Activated T-helper 2 cell treated with anti-CD3 and anti-CD28 coated beads, Interferon-gamma antibody, Interleukin-2, Interleukin-4, amounts not matched to agents 10 μg/mL and 5 μg/mL and 100 μg/mL, durations not matched to agents 14 hours and 24 hours and 36 hours (primary cell): ENCODE measurements at regions of chr1 and their contacts with region 1.

Region 1: DNA sequence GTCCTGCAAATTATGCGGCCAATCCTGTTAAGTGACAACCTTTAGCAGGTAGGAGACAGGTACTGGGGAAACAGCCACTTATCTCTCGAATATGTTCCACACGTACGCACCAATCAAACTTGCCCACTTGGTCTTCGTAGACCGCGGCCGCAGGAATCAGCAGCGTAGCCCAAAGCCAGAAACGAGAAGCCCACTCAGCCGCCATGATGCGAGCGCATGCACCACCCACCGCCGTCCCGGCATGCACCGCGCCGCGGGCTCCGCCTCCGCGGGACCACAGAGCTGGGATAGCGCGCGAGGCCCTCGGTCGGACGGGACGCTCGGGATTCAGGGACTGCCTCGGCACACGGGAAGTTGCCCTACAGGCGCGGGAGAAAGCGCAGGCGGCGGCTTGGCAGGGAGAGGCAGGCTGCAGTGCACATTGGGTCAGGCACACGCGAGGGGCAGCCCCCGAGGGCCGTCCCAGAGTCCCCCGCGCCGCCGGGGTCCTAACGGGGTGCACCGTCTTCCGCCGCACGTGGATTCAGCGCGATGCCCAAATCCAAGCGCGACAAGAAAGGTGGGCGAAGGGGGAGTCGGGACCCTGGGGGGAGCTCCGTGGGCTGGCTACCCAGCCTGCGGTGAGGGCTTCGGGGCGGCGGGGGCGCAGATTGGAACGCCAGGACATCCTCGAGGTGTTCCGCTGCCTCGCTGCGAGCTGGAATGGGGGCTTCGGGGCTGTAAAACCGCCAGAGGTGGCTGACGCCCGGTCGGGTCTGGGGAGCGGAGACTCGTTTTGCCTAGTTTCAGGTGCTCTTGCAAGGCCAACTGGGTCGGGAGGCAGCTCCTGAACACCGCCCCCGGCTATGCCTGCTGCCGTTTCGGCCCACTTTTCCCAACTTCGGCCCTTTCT is at the starts of genes EMC1 and MRTO4:
- DNase-seq: peak; percentile 89
- H3K4me3 Mint-ChIP-seq: peak within 1 kb of the TSS; percentile 93
- H3K27ac Mint-ChIP-seq: peak within 1 kb of the TSS; percentile 97
- H3K4me1 Mint-ChIP-seq: peaks cover 24% of the 10 kb centered on the region
- H3K27me3 Mint-ChIP-seq: no peaks in the 10 kb centered on the region
- total RNA-seq, gene EMC1: 54.0 and 57.4 TPM in 2 replicates
- total RNA-seq, gene MRTO4: 109 and 113 TPM in 2 replicates

Region 2: GRCh38 chr1:18956369-18957135 is 295.0 kb before region 1 on chr1 and contains the start of gene IFFO2:
- intact Hi-C with region 1: loop called (anchors 5 kb)
- DNase-seq: peak; percentile 96
- H3K4me3 Mint-ChIP-seq: peak within 1 kb of the TSS; percentile 86
- H3K27ac Mint-ChIP-seq: peak within 1 kb of the TSS; percentile 83
- H3K4me1 Mint-ChIP-seq: peaks cover 49% of the 10 kb centered on the region
- H3K27me3 Mint-ChIP-seq: peaks cover 6% of the 10 kb centered on the region
- total RNA-seq, gene IFFO2: 48.5 and 49.4 TPM in 2 replicates

Region 3: GRCh38 chr1:19311959-19312781 is 60.6 kb after region 1 on chr1 and contains the starts of genes AKR7A2 and SLC66A1:
- intact Hi-C with region 1: loop called (anchors 1 kb)
- DNase-seq: peak; percentile 91
- H3K4me3 Mint-ChIP-seq: peak within 1 kb of the TSS; percentile 93
- H3K27ac Mint-ChIP-seq: peak within 1 kb of the TSS; percentile 78
- H3K4me1 Mint-ChIP-seq: peaks cover 31% of the 10 kb centered on the region
- H3K27me3 Mint-ChIP-seq: no peaks in the 10 kb centered on the region
- total RNA-seq, gene AKR7A2: 34.3 and 38.8 TPM in 2 replicates
- total RNA-seq, gene SLC66A1: 10.6 and 12.1 TPM in 2 replicates

Region 4: DNA sequence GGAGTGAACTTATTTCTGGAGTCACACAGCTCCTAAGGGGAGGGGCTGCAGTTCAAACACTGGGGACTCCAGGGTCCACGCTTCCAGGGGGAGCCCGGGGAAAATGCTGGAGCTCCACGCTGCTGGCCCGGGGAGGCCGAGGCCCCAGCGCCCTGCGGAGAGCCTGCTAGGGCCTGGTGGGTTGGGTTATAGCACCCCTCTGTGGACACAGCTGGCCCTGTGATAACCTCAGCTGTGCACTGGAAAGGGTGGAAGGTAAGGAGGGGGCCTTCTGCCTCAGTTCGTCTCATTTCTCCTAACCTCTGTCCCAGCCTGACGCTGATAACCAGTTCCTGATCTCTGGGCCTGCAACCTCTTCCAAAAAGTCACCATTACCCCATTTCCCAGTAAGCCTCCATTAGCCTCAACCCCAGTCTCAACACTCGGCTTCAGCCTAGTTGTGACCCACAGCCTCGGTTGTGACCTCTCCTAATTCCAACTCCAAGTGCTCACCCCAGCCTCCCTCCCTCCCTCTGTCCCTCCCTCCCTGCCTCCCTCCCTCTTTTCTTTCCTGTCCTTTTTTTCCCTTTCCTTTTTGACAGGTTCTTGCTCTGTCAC is 399.7 kb after region 1 on chr1:
- intact Hi-C with region 1: loop called (anchors 5 kb)
- DNase-seq: peak; percentile 41
- H3K4me3 Mint-ChIP-seq: no peak overlapping the region
- H3K27ac Mint-ChIP-seq: no peak overlapping the region
- H3K4me1 Mint-ChIP-seq: peaks cover 25% of the 10 kb centered on the region
- H3K27me3 Mint-ChIP-seq: no peaks in the 10 kb centered on the region